Right ventricle myocardium superior (tissue), 1 donor: ENCODE measurements at regions of chr1 and their contacts with region 1.

Region 1: DNA sequence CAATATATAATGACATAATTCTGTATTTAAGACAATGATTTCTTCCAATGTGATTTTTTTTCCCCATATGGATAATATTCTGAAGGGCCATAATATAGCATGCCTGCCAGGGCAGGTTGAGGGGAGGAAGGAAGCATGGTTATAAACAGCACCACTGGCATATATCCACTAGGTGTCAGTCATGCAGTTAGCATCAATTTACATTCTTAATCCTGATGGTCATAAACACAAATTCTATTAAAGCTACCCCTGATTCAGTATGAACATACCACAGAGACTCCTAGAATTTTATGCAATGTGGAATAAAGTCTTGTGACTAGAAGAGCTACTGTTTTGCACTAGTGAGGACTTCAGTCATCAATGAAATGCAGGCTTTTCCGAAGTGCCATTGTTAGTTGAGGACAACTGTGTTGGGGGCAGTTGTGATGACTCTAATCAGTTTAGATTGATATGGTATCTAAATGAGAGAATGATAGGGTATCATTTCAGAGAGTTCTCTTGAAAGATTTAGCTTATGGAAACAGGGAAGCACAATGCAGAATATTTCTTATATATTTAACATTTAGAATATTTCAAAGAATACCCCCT is 342.7 kb upstream of the NR5A2 start:
- DNase-seq: no peak
- ATAC-seq: peak; percentile 69

Region 2: GRCh38 chr1:199945591-199945990 is 260.8 kb after region 1 on chr1:
- intact Hi-C with region 1: no loop called
- DNase-seq: no peak
- ATAC-seq: no peak

Region 3: DNA sequence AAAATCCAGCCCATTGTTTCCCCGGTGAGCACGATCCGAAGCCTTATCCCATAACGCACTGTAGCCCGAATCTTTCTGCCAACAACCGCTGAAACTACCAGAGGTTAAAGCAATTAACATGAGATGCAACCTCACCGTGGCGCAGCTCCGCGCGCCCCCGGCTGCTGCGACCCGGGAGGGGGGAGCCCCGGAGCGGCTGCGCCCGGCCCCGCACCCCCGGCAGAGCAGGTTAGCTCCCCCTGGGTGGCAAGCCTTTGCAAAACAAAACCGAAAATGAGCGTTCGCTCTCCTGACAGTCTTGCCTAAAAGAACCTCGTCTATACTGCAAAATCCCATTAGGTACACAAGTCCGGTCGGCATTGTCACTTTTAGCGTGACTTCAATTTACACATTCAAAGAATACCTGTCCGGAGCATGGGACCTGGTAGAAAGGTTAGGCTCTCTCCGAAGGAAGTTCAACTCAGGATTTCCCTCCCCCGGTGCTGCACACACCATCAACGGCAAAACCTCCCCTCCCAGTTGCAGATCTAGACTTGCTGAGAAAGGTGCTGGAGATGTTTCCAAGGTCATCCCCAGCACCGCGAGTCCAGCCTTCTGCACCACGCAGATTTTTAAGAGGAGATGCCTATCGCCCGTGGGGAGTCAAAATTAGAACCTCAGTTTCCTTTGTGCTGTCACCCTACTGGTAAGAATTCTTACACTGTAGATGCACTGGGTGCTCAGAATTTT is 617.6 kb after region 1 on chr1:
- intact Hi-C with region 1: loop called (anchors 10 kb)
- DNase-seq: no peak
- ATAC-seq: peak; percentile 78

Region 4: GRCh38 chr1:200483443-200484143 is 798.8 kb after region 1 on chr1:
- intact Hi-C with region 1: loop called (anchors 5 kb)
- DNase-seq: no peak
- ATAC-seq: no peak